Activated T-helper 2 cell treated with anti-CD3 and anti-CD28 coated beads, Interferon-gamma antibody, Interleukin-2, Interleukin-4, amounts not matched to agents 10 μg/mL and 5 μg/mL and 100 μg/mL, durations not matched to agents 14 hours and 24 hours and 36 hours (primary cell): ENCODE measurements at regions of chr19 and their contacts with region 1.

Region 1: DNA sequence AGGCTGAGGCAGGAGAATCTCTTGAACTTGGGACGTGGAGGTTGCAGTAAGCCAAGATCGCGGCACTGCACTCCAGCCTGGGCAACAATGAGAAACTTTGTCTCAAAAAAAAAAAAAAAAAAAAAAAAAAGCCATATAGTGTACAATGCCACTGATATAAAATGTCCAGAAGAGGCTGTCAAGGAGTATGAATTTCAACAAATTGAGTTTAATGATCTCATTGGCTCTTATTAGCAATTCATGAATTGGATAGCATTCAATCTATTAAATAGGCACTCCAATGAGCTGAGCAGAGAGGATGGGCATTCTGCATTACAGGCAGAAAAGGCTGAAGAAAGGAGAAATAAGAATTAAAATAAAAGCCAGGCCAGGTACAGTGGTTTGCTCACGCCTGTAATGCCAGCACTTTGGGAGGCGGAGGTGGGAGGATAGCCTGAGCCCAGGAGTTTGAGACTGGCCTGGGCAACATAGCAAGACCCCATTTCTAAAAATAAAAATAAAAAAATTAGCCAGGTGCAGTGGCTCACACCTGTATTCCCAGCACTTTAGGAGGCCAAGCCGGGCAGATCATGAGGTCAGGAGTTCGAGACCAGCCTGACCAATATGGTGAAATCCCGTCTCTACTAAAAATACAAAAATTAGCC is 757 bp upstream of the LMNB2 start:
- DNase-seq: no peak
- H3K4me3 Mint-ChIP-seq: peak overlapping the region; percentile 83
- H3K27ac Mint-ChIP-seq: peak overlapping the region; percentile 90
- H3K4me1 Mint-ChIP-seq: peaks cover 23% of the 10 kb centered on the region
- H3K27me3 Mint-ChIP-seq: no peaks in the 10 kb centered on the region

Region 2: GRCh38 chr19:2427429-2428320 is 29.8 kb before region 1 on chr19 and contains the start of gene TIMM13:
- intact Hi-C with region 1: loop called (anchors 1 kb)
- DNase-seq: peak; percentile 97
- H3K4me3 Mint-ChIP-seq: peak within 1 kb of the TSS; percentile 95
- H3K27ac Mint-ChIP-seq: peak within 1 kb of the TSS; percentile 96
- H3K4me1 Mint-ChIP-seq: peaks cover 4% of the 10 kb centered on the region
- H3K27me3 Mint-ChIP-seq: no peaks in the 10 kb centered on the region
- total RNA-seq, gene TIMM13: 139 and 145 TPM in 2 replicates

Region 3: DNA sequence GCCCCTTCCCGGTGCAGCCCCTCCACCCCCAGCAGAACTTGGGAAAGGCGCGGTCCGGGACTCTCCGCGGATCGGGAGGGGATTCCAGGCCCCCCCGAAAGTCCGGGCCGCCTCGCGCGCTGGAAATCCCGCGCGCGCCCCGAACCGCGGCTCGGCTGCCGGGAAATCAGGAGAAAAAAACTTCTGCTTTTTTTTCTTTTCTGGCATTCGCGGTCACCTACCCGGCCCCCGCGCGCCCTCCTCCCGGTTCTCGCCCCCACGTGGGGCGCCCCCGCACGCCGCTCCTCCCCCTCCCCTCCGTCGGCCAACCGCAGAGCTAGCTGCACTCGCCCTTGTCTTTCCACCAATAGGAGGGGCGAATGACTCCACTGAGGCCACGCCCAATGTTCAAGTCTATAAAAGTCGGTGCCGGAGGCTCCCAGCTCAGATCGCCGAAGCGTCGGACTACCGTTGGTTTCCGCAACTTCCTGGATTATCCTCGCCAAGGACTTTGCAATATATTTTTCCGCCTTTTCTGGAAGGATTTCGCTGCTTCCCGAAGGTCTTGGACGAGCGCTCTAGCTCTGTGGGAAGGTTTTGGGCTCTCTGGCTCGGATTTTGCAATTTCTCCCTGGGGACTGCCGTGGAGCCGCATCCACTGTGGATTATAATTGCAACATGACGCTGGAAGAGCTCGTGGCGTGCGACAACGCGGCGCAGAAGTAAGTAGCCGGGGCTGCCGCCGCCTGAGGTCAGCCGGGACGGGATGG is 18.4 kb after region 1 on chr19 and contains the start of gene GADD45B:
- intact Hi-C with region 1: no loop called
- DNase-seq: peak; percentile 95
- H3K4me3 Mint-ChIP-seq: peak within 1 kb of the TSS; percentile 96
- H3K27ac Mint-ChIP-seq: peak within 1 kb of the TSS; percentile 89
- H3K4me1 Mint-ChIP-seq: peaks cover 13% of the 10 kb centered on the region
- H3K27me3 Mint-ChIP-seq: peaks cover 3% of the 10 kb centered on the region
- total RNA-seq, gene GADD45B: 90.7 and 95.2 TPM in 2 replicates